Activated naive CD4-positive, alpha-beta T cell treated with anti-CD3 and anti-CD28 coated beads for 36 hours (primary cell): ENCODE measurements at regions of chr12 and their contacts with region 1.

Region 1: GRCh38 chr12:109597795-109598427 is 24.3 kb downstream of the MVK start:
- DNase-seq: peak; percentile 80
- H3K4me3 Mint-ChIP-seq: no peak overlapping the region
- H3K27ac Mint-ChIP-seq: no peak overlapping the region
- H3K4me1 Mint-ChIP-seq: peaks cover 35% of the 10 kb centered on the region
- H3K27me3 Mint-ChIP-seq: no peaks in the 10 kb centered on the region

Region 2: DNA sequence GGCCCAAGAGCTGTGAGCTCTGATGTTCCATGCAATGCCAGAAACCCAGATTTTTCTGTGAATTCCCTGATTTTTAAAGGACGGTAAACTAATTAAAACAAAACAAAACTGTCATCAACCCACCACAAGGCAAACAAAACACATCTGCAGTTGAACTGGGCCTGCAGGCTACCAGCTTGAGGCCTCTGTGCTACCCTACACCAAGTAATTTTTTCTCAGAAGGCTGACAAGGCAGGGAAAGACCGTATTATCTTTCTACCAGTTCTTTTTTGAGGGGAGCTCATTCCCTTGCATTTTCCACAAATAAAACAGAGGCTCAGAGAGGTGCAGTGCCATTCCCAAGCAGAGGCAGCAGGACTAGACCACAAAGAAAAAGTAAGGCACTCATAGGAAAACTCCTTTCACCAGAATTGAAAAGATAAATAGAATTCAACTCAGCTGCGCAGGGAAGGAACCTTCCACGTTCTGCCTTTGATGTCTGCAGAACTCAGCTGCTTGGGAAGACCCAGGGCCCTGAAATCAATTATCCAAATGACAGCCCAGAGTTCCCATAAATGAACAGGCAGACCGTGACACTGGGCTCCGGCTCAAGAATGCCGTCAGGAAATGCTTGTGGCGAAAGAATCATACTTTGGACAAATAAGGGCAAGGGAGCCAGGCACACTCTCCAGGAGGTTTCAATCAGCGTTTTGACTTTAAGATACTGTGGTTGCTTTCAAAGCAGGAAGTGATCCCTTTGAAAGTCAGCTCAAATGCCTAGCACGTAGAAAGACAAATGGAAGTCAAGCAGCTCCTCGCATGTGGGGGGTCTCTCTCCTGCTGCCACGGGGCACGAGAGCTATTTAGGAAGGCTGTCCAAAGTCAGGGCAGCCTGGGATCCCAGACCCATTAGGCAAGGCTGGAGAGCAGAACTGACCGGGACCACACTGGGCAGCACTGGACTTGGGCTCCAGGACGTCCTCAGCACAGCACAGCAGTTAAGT is 134.9 kb before region 1 on chr12:
- CTCF ChIA-PET with region 1: no interaction called
- intact Hi-C with region 1: no loop called
- DNase-seq: no peak
- H3K4me3 Mint-ChIP-seq: no peak overlapping the region
- H3K27ac Mint-ChIP-seq: no peak overlapping the region
- H3K4me1 Mint-ChIP-seq: peaks cover 37% of the 10 kb centered on the region
- H3K27me3 Mint-ChIP-seq: no peaks in the 10 kb centered on the region

Region 3: DNA sequence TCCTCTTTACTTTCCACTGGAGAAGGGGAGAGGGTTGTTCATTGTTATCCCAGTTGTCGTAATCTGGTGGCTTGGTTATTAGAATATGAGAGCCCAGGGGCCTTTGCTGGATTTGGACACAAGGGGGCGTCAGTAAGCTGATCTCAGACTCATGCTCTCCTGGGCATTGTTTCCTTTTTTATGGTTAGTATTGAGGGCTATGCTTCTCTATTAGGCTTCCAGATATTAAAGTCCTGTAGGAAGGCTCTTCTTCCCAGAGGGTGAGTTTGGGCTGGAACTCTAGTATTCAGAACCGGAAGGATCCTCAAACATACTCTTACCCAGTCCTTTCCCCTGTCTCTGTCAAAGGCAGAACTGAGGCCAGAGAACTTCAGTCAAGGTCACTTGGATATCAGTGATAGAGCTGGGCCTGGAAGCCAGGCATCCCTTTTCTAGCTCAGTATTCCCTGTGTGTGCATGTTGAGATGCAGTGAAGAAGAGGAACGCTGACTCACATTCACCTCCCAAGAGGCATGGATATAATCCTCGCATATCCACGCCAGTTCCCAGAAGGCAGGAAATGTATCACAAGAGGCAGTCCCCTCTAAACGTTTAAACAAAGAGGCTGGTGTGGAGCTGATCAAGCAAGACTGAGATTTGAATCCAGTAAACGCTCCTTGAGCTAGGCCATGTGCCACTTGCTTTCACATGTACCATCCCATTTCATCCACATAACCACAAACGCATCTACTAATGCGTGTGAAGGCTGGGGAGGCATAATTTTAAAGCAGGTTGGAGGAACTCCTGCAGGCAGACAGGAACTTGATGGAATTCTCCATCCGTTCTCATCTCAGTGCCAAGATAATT is 78.9 kb before region 1 on chr12:
- CTCF ChIA-PET with region 1: interaction called, 11 read pairs
- intact Hi-C with region 1: loop called (anchors 1 kb)
- DNase-seq: peak; percentile 77
- H3K4me3 Mint-ChIP-seq: no peak overlapping the region
- H3K27ac Mint-ChIP-seq: no peak overlapping the region
- H3K4me1 Mint-ChIP-seq: no peaks in the 10 kb centered on the region
- H3K27me3 Mint-ChIP-seq: no peaks in the 10 kb centered on the region

Region 4: DNA sequence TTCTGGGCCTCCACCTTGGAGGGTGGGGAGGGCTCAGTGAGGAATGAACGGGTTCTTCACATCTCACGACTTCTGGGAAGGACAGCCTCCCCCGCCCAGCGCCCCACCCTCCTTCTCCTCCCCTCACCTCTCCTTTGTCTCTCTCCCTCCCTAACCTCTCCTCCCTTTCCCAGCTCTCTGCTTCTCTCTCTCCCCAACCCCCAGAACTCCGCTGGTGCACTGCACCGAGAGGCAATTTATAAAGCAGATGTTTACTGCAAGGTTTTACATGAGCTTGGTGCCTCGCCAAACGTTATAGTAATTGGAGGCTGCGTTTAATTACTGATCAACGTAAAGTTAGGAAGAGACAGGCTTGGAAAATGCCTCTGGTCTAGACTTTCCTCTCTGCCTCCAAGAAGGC is 72.8 kb after region 1 on chr12:
- CTCF ChIA-PET with region 1: interaction called, 12 read pairs
- intact Hi-C with region 1: no loop called
- DNase-seq: no peak
- H3K4me3 Mint-ChIP-seq: no peak overlapping the region
- H3K27ac Mint-ChIP-seq: no peak overlapping the region
- H3K4me1 Mint-ChIP-seq: no peaks in the 10 kb centered on the region
- H3K27me3 Mint-ChIP-seq: peaks cover 14% of the 10 kb centered on the region

Region 5: DNA sequence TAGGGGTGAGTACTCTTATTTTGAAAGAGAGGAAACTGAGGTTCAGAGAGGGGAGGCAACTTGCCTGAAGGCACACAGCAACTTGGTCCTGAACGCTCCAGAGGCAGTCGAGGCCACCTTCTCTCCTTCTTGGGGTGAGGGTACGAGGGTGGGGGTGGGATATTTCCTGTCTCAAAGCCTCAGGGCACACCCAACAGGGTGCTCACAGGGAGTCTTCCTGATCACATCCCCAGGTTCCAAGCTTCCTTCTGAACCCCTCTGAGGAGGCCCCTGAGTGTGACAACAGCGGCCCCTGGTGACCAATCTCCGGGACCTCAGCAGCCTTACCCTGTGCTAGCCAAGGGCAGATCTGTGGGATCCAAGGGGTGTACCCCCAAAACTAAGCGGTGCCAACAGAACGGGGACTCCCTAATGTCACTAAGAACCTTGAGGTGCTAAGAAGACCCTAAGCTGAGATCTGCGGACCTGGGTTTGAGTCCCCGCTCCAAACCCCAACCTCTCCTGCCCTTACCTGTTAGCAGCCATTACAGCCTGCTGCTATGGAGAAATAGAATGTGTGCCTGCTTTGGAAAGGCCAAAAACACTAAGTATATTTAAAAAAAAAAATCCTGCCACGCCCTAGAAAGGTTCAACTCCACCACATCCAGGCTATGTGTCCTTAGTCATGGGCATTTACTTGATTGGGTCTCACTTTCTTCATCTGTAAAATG is 177.4 kb after region 1 on chr12:
- CTCF ChIA-PET with region 1: interaction called, 30 read pairs
- intact Hi-C with region 1: loop called (anchors 1 kb)
- DNase-seq: peak; percentile 84
- H3K4me3 Mint-ChIP-seq: no peak overlapping the region
- H3K27ac Mint-ChIP-seq: no peak overlapping the region
- H3K4me1 Mint-ChIP-seq: peaks cover 9% of the 10 kb centered on the region
- H3K27me3 Mint-ChIP-seq: no peaks in the 10 kb centered on the region

Region 6: DNA sequence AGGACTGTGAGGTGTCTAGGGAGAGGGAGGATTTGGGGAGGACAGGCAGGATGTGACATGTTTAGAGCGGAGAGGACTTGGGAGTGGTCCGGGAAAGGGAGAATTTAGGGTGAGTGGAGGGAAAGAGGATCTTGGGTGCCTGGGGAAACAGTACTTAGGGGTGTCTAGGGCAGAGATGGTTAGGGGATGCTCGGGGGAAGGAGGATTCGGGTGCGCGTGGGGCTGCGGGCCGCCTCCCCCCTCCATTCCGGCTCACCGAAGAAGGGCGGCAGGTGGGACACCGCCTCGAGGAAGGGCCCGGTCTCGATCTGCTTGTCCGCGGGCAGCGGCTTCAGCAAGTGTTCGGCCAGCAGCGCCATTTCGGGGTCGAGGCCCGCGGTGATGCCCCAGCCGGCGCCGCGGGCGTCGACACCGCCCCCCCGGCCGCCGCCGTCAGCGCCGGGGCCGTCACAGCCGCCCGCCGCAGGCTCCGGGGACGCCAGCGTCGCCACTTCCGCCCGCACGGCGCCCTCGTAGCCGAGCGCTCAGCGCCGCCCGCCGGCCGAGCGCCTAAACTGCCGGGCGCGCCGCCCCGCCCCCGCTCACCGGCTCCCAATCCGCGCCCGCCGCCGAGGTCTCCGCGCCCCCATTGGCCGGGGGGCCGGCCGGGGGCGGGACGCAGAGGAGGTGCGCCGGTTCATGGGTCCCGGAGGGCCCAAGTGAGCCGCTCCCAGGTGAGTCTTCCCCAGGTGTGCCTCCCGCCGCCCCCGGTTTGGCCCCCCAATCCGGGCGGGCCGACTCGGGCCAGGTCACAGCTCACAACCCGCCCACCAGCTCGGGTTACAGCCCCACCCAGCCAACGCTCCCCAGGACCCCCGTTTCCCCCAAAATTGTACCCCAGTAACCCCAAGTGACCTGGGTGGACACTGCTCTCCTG is 282.4 kb after region 1 on chr12 and contains the start of gene GLTP:
- CTCF ChIA-PET with region 1: no interaction called
- intact Hi-C with region 1: loop called (anchors 5 kb)
- DNase-seq: peak; percentile 86
- H3K4me3 Mint-ChIP-seq: peak within 1 kb of the TSS; percentile 93
- H3K27ac Mint-ChIP-seq: peak within 1 kb of the TSS; percentile 66
- H3K4me1 Mint-ChIP-seq: peaks cover 42% of the 10 kb centered on the region
- H3K27me3 Mint-ChIP-seq: no peaks in the 10 kb centered on the region
- total RNA-seq, gene GLTP: 18.1 to 19.9 TPM